Posterior vena cava (tissue), 2 donors: ENCODE measurements at regions of chr1 and their contacts with region 1.

Region 1: DNA sequence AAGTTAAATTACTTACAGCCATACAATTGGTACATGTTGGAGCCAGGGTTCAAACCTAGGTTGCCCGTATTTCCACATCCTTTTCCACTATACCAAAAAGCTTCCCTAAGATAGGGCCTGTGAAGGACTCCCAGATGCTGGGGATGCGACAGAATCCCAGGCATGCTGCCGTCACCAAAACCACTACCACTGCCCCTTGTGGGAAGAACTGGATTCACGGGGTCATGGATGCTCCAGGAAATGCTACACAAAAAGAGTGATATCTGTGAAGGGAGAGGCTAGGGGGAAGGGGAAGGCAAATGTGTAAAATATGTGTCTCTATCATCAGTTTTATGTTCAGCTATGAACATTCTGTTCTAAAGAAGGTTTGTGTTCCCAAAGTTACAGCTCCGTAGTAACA is 133.9 kb upstream of the IVNS1ABP start:
- DNase-seq: no peak

Region 2: GRCh38 chr1:185483664-185484450 is 32.9 kb after region 1 on chr1:
- intact Hi-C with region 1: loop called in 1 of 2 experiments (anchors 1 kb)
- DNase-seq: no peak

Region 3: DNA sequence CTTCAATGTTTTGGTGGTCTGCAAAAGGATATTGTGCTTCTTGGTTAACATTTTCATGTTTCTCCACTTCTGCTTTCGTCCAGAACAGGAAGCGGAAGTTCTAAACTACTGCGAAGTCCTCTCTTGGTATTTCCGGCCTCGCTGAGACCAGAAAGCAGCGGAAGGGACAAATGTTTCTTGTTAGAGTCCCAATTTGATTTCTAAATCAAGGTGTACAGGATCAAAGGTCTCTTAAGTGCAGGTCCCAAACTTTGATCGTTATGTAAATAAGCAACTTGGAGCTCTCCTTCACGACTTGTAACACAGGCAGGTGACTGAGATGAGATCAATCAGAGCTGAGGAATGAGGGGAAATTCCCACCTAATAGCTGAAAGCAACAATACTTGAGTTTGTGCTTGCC is 243.2 kb after region 1 on chr1:
- intact Hi-C with region 1: no loop called
- DNase-seq: no peak